ENCODE measurements at regions of chr2 and their contacts with region 1.

Region 1: GRCh38 chr2:233976690-233977294 is 59.6 kb downstream of the TRPM8 start:
- DNase-seq: peak; percentile 76
- ATAC-seq: peak; percentile 59
- H3K4me3 ChIP-seq: no peak overlapping the region
- H3K27ac ChIP-seq: no peak overlapping the region
- H3K4me1 ChIP-seq: peaks cover 14% of the 10 kb centered on the region
- H3K27me3 ChIP-seq: no peaks in the 10 kb centered on the region
- CTCF ChIP-seq: peak; percentile 77
- POLR2A ChIP-seq: no peak
- RAD21 ChIP-seq: peak; percentile 87

Region 2: DNA sequence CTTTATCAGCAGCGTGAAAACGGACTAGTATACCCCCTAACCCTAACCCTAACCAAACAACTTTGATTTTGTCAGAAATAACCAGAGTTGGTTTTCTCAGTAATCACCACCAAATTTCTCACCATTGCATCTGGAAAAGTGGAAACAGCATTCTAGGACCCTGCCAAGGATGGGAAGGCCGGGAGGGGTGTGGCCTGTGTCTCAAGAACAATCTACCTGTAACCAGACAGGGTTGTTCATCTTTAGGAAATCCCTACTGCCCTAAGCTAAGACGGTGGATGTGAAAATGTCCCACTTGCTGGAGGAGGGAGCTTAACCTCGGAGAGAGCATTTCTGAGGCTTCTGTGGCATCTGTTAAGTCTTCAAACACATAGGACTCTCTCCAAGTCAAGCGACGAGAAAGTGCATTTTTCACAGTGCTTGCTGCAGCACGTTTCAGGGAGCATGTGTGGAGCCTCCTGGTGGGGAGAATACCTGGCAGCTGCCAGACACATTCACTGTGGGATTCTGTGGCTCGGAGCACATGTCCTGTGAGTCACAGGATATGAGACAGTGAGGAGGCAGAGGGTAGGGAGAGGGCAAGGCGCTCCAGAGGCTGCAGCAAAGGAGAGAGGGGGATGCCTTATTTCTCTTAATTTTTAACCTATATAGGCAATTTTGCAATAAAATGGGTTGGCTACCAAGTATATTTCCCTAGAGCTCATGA is 281.2 kb after region 1 on chr2:
- CTCF ChIA-PET with region 1: no interaction called
- POLR2A ChIA-PET with region 1: no interaction called
- dilution Hi-C with region 1: no loop called
- in situ Hi-C with region 1: no loop called
- intact Hi-C with region 1: loop called (anchors 10 kb)
- DNase-seq: peak; percentile 99
- ATAC-seq: peak; percentile 97
- H3K4me3 ChIP-seq: no peak overlapping the region
- H3K27ac ChIP-seq: peak overlapping the region; percentile 6
- H3K4me1 ChIP-seq: peaks cover 10% of the 10 kb centered on the region
- H3K27me3 ChIP-seq: no peaks in the 10 kb centered on the region
- CTCF ChIP-seq: peak; percentile 81
- POLR2A ChIP-seq: no peak
- RAD21 ChIP-seq: peak; percentile 77

Region 3: DNA sequence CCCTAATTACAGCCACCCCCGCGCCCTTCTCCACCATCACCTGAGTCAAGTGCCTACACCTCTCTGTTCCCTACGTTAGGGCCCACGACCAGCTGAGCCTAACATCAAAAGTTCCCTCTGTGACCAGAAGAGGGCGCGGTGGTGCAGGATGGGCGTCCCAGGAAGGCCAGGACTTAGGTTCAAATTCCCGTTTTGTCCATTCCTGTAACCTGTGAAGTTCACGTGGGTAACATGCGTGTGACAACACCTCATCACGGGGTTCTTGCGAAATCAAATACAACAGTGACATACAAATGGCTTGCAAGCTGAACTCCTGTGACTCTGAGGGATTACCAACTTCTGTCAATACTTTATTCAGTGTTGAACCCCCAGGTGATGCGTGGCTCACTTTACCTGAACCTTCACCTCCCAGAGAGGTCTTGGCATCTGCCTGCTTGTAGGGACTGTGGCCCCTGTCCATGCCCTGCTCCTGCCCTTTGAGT is 312.2 kb after region 1 on chr2:
- CTCF ChIA-PET with region 1: no interaction called
- POLR2A ChIA-PET with region 1: no interaction called
- dilution Hi-C with region 1: no loop called
- in situ Hi-C with region 1: no loop called
- intact Hi-C with region 1: loop called (anchors 2 kb)
- DNase-seq: peak; percentile 41
- ATAC-seq: no peak
- H3K4me3 ChIP-seq: no peak overlapping the region
- H3K27ac ChIP-seq: no peak overlapping the region
- H3K4me1 ChIP-seq: peaks cover 18% of the 10 kb centered on the region
- H3K27me3 ChIP-seq: no peaks in the 10 kb centered on the region
- CTCF ChIP-seq: peak; percentile 65
- POLR2A ChIP-seq: no peak
- RAD21 ChIP-seq: peak; percentile 71

Region 4: GRCh38 chr2:234528410-234529148 is 551.8 kb after region 1 on chr2:
- CTCF ChIA-PET with region 1: no interaction called
- POLR2A ChIA-PET with region 1: no interaction called
- dilution Hi-C with region 1: no loop called
- in situ Hi-C with region 1: no loop called
- intact Hi-C with region 1: no loop called
- DNase-seq: no peak
- ATAC-seq: no peak
- H3K4me3 ChIP-seq: no peak overlapping the region
- H3K27ac ChIP-seq: no peak overlapping the region
- H3K4me1 ChIP-seq: no peaks in the 10 kb centered on the region
- H3K27me3 ChIP-seq: peaks cover 24% of the 10 kb centered on the region
- CTCF ChIP-seq: no peak
- POLR2A ChIP-seq: no peak
- RAD21 ChIP-seq: no peak

Region 5: DNA sequence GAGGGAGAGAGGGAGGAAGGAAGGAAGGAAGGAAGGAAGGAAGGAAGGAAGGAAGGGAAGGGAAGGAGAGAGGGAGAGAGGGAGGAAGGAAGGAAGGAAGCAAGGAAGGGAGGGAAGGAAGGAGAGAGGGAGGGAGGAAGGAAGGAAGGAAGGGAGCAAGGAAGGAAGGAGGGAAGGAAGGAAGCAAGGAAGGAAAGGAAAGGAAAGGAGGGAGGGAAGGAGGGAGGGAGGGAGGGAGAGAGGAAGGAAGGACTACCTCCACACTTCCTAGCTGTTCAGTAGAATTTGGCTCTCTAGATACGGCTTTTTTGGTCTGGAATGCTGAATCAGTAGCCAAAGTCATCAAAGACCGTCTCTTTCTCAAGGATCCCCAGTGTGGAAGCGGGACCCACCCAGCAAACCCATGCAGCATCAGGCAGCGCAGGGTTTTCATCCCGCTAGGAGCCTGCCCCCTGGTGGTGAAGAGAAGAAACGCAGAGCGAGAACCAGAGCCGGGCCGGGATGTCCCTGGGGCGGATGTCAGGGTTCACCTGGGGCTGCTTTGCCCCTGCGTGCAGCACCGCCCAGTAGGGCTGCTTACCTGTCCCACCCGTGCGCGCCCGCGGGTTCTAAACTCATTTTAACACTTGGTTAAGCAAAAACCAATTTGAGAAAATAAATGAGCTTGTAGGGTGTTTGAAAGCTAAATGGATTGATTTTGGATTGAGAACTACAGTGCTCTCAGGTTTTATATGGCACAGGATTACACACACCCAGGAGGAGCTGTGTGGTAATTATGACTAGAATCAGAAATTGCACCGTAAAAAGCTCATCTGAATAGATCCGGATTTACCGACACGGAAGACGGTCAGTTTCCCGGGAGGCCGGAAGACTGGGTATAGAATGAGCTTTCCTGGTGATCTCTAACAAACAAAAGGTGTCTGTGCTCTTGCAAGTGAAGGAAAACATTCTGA is 568.1 kb after region 1 on chr2:
- CTCF ChIA-PET with region 1: interaction called, 7 read pairs
- POLR2A ChIA-PET with region 1: no interaction called
- dilution Hi-C with region 1: no loop called
- in situ Hi-C with region 1: loop called (anchors 5 kb)
- intact Hi-C with region 1: loop called (anchors 1 kb)
- DNase-seq: peak; percentile 59
- ATAC-seq: peak; percentile 95
- H3K4me3 ChIP-seq: no peak overlapping the region
- H3K27ac ChIP-seq: no peak overlapping the region
- H3K4me1 ChIP-seq: no peaks in the 10 kb centered on the region
- H3K27me3 ChIP-seq: no peaks in the 10 kb centered on the region; the same call in 1 of the 2 replicates
- CTCF ChIP-seq: peak; percentile 77
- POLR2A ChIP-seq: no peak
- RAD21 ChIP-seq: peak; percentile 88

Region 6: GRCh38 chr2:235116885-235117492 is 1140.2 kb after region 1 on chr2:
- CTCF ChIA-PET with region 1: interaction called, 3 read pairs
- POLR2A ChIA-PET with region 1: no interaction called
- dilution Hi-C with region 1: no loop called
- in situ Hi-C with region 1: loop called (anchors 10 kb)
- intact Hi-C with region 1: loop called (anchors 5 kb)
- DNase-seq: peak; percentile 48
- ATAC-seq: peak; percentile 69
- H3K4me3 ChIP-seq: no peak overlapping the region
- H3K27ac ChIP-seq: no peak overlapping the region
- H3K4me1 ChIP-seq: no peaks in the 10 kb centered on the region
- H3K27me3 ChIP-seq: peaks cover 4% of the 10 kb centered on the region
- CTCF ChIP-seq: peak; percentile 76
- POLR2A ChIP-seq: no peak
- RAD21 ChIP-seq: peak; percentile 74

Measured in IMR-90 (cell line).